ENCODE measurements at regions of chr6 and their contacts with region 1.

Region 1: DNA sequence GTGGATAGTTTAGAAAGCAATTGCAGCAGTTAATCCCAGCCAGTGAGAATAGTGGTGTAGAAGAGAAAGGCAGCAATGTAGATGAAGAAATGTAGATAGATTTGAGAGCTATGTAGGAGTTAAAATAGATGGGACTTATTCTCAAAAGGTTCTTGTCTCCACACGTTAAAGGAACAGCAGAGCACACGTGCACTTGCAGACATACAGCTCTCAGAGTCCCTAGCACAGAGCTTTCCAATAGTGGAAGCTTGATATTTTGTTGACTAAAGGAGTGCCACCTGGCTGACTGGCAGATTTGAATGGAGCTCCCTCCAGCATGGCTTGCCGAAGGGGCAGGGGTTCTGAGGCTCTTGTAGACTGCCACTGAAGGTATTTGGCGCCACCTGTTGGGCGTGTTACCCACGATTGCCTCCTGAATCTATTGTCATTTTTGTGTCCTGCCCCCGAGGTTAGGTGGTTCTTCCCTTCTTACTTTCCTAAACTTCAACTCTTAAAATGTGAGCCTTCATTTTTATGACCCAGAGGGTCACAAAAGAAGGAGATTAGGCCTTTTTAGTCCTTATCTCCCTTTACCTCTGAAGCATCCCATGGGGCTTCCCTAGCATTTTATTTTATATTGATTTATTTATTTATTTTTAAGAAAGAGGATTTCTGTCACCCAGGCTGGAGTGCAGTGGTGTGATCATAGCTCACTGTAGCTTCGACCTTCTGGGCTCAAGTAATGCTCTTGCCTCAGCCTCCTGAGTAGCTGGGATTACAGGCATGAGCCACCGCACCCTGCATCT is 16.4 kb downstream of the BRD2 start:
- DNase-seq: peak; percentile 87
- H3K4me3 ChIP-seq: no peak overlapping the region
- H3K27ac ChIP-seq: no peak overlapping the region
- H3K4me1 ChIP-seq: peaks cover 32% of the 10 kb centered on the region
- H3K27me3 ChIP-seq: no peaks in the 10 kb centered on the region
- CTCF ChIP-seq: peak; percentile 92

Region 2: DNA sequence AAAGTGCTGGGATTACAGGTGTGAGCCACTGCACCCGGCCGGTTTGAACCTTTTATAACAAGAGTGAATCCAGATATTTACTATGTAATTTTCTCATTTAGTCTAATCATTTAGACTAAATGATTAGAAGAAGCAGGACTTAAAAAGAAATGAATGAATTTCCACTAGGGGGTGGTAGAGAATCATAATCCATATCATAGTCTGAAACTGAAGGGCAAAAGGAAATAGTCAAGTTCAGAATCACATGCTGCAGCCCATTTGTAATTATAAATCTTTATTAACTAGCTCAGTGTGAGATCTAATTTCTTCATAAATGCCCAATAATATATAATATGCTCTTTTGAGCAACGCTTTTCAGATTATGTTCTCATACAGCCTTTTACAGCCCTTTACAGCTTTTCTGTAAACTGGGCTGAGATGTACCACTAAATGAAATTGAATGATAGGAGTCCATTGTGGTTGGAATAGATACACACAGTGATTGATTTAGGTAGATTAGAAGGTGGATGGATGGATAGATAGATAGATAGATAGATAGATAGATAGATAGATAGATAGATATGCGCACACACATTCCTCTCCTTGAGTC is 99.0 kb before region 1 on chr6:
- intact Hi-C with region 1: loop called (anchors 5 kb)
- DNase-seq: no peak
- H3K4me3 ChIP-seq: no peak overlapping the region
- H3K27ac ChIP-seq: no peak overlapping the region
- H3K4me1 ChIP-seq: peaks cover 22% of the 10 kb centered on the region
- H3K27me3 ChIP-seq: no peaks in the 10 kb centered on the region
- CTCF ChIP-seq: peak; percentile 78

Region 3: GRCh38 chr6:32922083-32922482 is 62.7 kb before region 1 on chr6:
- intact Hi-C with region 1: no loop called
- DNase-seq: no peak
- H3K4me3 ChIP-seq: no peak overlapping the region
- H3K27ac ChIP-seq: no peak overlapping the region
- H3K4me1 ChIP-seq: no peaks in the 10 kb centered on the region
- H3K27me3 ChIP-seq: peaks cover 38% of the 10 kb centered on the region
- CTCF ChIP-seq: no peak

Region 4: DNA sequence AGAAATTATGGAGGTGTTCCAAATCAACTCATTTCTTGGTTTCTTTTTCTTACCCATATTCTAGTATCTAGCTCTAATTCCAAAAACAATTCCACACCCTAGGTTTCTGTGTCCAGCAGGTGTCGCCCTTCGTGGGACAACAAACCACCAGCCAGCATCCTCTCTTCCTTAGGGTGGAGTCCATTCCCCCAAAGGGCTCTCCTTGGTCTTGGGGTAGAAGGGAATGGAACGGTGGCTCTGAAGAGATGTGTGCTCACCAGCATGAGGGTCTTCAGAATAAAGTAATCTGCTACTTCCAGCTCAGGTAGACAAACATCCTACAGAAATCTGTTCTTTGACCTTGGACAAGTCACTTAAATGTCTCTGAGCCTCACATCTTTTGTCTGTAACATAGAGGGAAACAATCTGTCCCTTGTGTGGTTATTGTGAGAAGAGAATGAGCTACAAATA is 51.1 kb before region 1 on chr6:
- intact Hi-C with region 1: loop called (anchors 5 kb)
- DNase-seq: peak; percentile 78
- H3K4me3 ChIP-seq: no peak overlapping the region
- H3K27ac ChIP-seq: no peak overlapping the region
- H3K4me1 ChIP-seq: no peaks in the 10 kb centered on the region
- H3K27me3 ChIP-seq: peaks cover 4% of the 10 kb centered on the region
- CTCF ChIP-seq: peak; percentile 89

Region 5: DNA sequence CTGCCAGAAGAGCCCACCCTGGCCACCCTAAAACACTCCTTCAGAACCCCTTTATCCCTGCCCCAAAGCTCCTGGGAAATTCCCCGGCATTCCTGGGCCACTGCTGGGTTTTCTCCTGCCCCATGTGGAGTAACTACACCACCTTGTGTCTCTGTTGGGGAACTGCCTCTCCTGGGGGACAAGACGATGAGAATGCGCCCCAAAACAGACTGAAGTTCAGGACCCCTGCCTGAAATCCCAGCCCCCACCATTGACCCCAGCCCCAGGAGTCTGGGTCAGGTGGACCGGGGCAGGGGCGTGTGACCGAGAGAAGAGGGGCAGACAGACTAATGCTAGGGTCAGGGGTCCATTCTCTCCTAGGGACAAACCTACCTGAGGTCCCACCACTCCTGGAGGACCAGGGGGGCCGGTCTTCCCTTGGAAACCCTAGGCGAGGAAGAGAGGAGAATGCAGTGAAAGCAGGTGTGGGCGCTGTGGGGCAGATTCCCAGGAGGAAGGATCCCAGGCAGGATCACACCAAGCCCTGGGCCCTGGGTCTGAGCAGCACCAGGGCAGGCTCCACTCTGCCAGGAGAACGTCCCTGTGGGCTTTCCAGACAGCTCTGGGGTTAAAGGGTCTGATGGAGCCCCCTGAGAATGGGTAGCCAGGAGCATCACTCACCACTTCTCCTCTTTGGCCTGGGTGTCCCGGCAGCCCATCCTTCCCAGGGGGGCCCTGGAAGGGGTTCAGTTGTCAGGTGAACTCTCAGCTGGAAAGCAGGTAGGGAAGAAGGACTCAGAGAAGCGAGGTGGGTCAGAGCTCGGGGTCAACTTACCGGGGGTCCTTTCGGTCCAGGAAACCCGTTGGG is 188.1 kb after region 1 on chr6:
- intact Hi-C with region 1: no loop called
- DNase-seq: no peak
- H3K4me3 ChIP-seq: no peak overlapping the region
- H3K27ac ChIP-seq: no peak overlapping the region
- H3K4me1 ChIP-seq: no peaks in the 10 kb centered on the region
- H3K27me3 ChIP-seq: no peaks in the 10 kb centered on the region
- CTCF ChIP-seq: peak; percentile 59

Measured in left ventricle myocardium inferior (tissue), 1 donor.